ENCODE measurements at regions of chr21 and their contacts with region 1.

Region 1: DNA sequence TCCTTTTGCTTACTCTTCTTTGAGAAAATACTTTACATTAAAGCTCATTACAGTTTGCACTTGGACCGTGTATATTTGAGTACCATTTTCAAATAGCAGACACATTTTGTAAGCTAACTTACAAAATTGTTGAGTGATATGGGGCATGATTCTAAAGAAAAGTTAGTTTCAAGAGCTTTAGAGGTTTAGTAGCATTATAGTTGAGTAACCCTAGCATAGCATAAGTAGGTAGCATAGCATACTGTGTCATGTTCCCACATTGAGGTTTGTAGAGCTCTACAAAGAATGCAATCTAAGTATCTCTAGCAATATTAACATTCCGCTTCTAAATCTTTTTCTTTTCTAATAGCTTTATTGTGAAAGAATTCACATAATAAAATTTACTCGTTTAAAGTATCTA is 92.0 kb downstream of the ITSN1 start:
- DNase-seq: no peak

Region 2: DNA sequence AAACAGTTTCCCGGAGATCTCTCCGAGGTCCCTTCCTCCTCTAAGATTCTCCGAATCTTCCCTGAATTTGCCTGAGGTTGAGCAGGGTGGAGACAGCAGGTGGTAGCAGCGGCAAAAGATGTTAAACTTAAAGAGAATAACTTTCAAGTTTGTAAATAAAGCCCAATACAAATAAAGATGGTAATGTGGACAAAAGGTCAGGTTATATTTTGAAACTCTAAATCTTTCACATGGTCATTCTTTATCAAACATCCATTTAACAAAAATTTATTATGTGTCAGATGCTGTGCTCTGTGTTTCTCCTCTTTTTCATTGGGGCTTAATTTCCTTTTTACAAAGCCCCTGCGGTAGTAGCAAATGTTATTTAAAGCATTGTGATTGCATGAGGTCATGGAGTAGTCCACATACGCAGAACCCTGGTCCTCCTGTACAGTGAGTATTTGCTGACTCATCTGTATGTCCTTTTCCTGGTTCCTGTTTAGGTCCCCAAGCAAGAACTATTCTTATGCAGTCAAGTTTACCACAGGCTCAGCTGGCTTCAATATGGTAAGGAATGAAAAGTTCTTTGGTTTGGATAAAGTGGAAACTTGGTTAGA is 27.2 kb after region 1 on chr21:
- intact Hi-C with region 1: loop called in 1 of 2 experiments (anchors 1 kb)
- DNase-seq: no peak

Measured in posterior vena cava (tissue), 2 donors.